Heart right ventricle (tissue), 16 donors: ENCODE measurements at regions of chr6 and their contacts with region 1.

Region 1: DNA sequence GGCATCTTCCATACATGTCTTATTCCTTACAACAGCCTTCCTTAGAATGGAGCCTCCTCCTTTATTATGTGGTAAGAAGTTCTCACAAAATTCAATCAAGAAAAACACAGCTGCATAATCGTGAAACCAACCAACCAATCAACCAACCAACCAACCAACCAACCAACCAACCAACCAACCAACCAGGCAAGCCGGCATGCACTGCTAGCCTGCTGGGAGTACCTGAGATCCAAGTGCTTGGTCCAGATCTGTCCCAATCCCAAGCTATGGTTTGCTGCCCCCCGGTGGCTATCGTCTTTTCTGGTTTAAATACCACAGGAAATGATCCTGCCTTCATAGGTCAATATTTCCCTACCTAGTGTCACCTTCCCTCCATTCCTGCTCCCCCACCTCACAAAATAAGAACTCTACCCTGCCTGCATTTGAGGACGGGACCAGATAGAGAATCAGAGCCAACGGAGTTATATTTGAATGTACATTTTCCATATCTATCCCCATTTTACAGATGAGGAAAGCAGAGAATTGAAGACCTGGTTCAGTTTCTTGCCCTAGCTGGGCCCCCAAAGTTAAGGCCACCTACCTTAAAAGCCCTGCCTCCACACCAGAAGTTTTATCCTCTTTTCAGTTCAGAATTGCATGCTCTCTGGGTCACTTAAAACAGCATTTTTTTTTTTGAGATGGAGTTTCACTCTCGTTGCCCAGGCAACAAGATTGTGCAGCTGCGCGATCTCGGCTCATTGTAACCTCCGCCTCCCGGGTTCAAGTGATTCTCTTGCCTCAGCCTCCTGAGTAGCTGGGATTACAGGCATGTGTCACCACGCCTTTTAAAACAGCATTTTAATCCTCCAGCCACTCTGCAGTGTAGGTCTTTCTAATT is 27.1 kb downstream of the RAB44 start:
- DNase-seq: peak; percentile 60 to 63
- ATAC-seq: peak in 6 of 8 donors; percentile 38 to 59 (median 54)
- H3K4me3 ChIP-seq: no peak overlapping the region
- H3K27ac ChIP-seq: no peak overlapping the region
- H3K4me1 ChIP-seq: peaks cover 0 to 28% (median 10%) of the 10 kb centered on the region in 9 donors
- H3K27me3 ChIP-seq: no peaks in the 10 kb centered on the region
- CTCF ChIP-seq: peak; percentile 20 to 65 (median 53)

Region 2: GRCh38 chr6:36615018-36615761 is 109.6 kb before region 1 on chr6:
- intact Hi-C with region 1: loop called in 2 of 10 experiments (anchors 2 to 10 kb)
- DNase-seq: no peak
- ATAC-seq: peak in 7 of 8 donors; percentile 45 to 82 (median 73)
- H3K4me3 ChIP-seq: no peak overlapping the region
- H3K27ac ChIP-seq: peak overlapping the region in 4 of 10 donors; percentile 11 to 32 (median 20)
- H3K4me1 ChIP-seq: peaks cover 2 to 46% (median 25%) of the 10 kb centered on the region in 9 donors
- H3K27me3 ChIP-seq: no peaks in the 10 kb centered on the region
- CTCF ChIP-seq: peak; percentile 47 to 73 (median 65)

Region 3: GRCh38 chr6:36692220-36692619 is 32.5 kb before region 1 on chr6:
- intact Hi-C with region 1: loop called in 1 of 10 experiments (anchors 5 kb)
- DNase-seq: no peak
- ATAC-seq: peak in 3 of 8 donors; percentile 28 to 44 (median 36)
- H3K4me3 ChIP-seq: no peak overlapping the region
- H3K27ac ChIP-seq: peak overlapping the region in 1 of 10 donors; percentile 27
- H3K4me1 ChIP-seq: peaks cover 0 to 23% (median 14%) of the 10 kb centered on the region in 9 donors
- H3K27me3 ChIP-seq: no peaks in the 10 kb centered on the region
- CTCF ChIP-seq: no peak

Region 4: DNA sequence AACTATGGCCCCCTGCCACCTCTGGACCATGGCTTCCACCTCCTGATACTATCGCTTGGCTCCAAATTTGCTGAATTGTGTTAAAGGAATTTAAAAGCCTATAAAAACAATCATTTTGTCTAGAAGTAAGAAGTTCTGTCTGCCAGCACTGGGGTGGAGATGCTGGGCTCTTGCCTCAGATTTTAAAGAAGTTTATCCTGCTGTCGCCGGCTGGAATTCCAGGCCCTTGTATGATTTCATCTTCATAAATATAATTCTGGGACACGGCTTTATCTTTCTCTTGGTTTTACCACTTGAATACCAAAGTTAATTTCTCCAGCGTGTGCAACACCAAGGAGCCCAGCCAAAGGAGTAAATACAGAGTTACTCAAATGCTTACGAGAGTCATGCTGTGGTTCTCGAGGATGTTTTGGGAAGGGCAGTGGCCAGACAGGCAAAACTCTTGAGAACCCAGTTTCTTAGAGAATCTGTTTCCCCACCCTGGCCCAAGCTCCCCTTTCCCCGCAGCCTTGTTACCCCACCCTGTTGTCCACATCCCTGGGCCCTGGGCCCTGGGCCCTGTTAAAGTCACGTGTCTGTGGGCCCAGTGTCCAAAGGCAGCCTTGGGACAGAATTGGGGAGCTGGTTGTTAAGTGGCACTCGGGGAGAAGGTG is 192.9 kb after region 1 on chr6:
- intact Hi-C with region 1: no loop called
- DNase-seq: no peak
- ATAC-seq: peak in 7 of 8 donors; percentile 27 to 63 (median 49)
- H3K4me3 ChIP-seq: no peak overlapping the region
- H3K27ac ChIP-seq: peak overlapping the region; percentile 54 to 91 (median 75)
- H3K4me1 ChIP-seq: peaks cover 8 to 45% (median 29%) of the 10 kb centered on the region in 9 donors
- H3K27me3 ChIP-seq: no peaks in the 10 kb centered on the region
- CTCF ChIP-seq: no peak